ENCODE measurements at regions of chr1 and their contacts with region 1.

Region 1: GRCh38 chr1:173429471-173430402 is 47.4 kb upstream of the PRDX6 start:
- DNase-seq: peak; percentile 79
- H3K4me3 Mint-ChIP-seq: peak overlapping the region; percentile 20
- H3K27ac Mint-ChIP-seq: peak overlapping the region; percentile 55
- H3K4me1 Mint-ChIP-seq: peaks cover 19% of the 10 kb centered on the region
- H3K27me3 Mint-ChIP-seq: no peaks in the 10 kb centered on the region

Region 2: DNA sequence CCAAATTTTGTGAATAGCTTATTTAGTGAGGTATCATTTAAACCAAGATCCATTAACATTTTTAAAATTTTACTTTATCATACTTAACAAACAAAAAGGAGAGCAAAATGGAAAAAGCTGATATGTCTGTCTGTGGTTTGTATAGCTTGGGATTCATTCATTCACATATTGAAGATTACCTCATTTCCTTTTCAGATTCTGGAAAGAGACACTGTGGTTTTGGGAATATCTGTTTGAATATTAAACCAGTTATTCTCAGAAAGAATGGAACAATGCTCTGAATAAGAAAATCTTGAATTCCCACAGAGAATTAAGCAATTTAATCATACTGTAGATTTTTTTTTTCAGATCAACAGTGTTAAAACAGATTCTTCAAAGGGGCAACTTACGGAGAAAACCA is 46.4 kb before region 1 on chr1:
- CTCF ChIA-PET with region 1: no interaction called
- POLR2A ChIA-PET with region 1: no interaction called
- intact Hi-C with region 1: no loop called
- DNase-seq: no peak
- H3K4me3 Mint-ChIP-seq: no peak overlapping the region
- H3K27ac Mint-ChIP-seq: no peak overlapping the region
- H3K4me1 Mint-ChIP-seq: no peaks in the 10 kb centered on the region
- H3K27me3 Mint-ChIP-seq: no peaks in the 10 kb centered on the region

Region 3: GRCh38 chr1:173476664-173477285 is 47.0 kb after region 1 on chr1:
- CTCF ChIA-PET with region 1: interaction called, 60 read pairs
- POLR2A ChIA-PET with region 1: interaction called, 8 read pairs
- intact Hi-C with region 1: loop called (anchors 1 kb)
- DNase-seq: peak; percentile 90
- H3K4me3 Mint-ChIP-seq: peak overlapping the region; percentile 84
- H3K27ac Mint-ChIP-seq: peak overlapping the region; percentile 90
- H3K4me1 Mint-ChIP-seq: peaks cover 53% of the 10 kb centered on the region
- H3K27me3 Mint-ChIP-seq: no peaks in the 10 kb centered on the region

Region 4: GRCh38 chr1:173628888-173629287 is 199.2 kb after region 1 on chr1:
- CTCF ChIA-PET with region 1: interaction called, 3 read pairs
- POLR2A ChIA-PET with region 1: no interaction called
- intact Hi-C with region 1: loop called (anchors 1 kb)
- DNase-seq: no peak
- H3K4me3 Mint-ChIP-seq: no peak overlapping the region
- H3K27ac Mint-ChIP-seq: no peak overlapping the region
- H3K4me1 Mint-ChIP-seq: no peaks in the 10 kb centered on the region
- H3K27me3 Mint-ChIP-seq: no peaks in the 10 kb centered on the region

Region 5: DNA sequence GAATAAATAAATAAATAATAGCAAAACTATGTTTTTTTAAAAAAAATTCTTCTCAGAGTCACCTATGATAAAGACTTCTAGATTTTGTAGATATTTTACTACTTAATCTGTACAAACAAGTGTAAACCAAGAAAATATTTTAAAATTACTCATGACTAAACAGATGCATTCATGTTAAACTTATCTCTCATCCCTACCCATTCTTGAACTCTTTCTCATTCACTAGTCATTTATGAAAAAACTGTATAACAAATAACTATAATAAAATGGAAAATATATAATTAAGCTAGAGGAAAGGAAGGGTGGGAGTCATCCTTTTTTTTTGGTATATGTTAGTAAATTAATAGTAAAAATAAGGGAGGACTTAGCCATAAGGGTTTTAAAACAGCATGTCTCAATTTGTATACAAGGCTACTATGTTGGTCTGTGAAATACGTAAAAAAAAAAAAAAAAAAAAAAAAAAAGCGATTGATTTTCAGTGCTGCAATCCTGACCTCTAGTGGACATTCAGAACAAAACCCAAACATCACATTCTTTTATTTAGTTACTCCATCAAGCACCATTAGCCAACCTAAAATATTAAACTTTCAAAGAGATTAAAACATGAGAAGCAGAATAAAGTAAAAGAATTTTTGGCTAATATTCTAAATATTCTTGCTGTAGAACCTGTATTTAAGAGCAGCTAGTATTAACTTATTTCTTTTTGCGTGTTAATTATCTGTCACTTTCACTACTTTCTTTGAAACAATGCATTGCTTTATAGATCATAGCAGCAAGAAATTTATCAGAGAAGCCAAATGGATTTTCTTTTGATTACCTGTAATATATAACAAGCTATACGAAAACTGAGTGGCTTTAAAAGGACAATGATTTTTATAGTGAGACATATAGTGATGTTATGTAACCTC is 1314.2 kb after region 1 on chr1:
- CTCF ChIA-PET with region 1: no interaction called
- POLR2A ChIA-PET with region 1: no interaction called
- intact Hi-C with region 1: loop called (anchors 5 kb)
- DNase-seq: no peak
- H3K4me3 Mint-ChIP-seq: no peak overlapping the region
- H3K27ac Mint-ChIP-seq: no peak overlapping the region
- H3K4me1 Mint-ChIP-seq: peaks cover 4% of the 10 kb centered on the region
- H3K27me3 Mint-ChIP-seq: no peaks in the 10 kb centered on the region

Measured in activated CD4-positive, alpha-beta memory T cell treated with anti-CD3 and anti-CD28 coated beads for 36 hours (primary cell).